PC-9 (cell line): ENCODE measurements at regions of chr4 and their contacts with region 1.

Region 1: DNA sequence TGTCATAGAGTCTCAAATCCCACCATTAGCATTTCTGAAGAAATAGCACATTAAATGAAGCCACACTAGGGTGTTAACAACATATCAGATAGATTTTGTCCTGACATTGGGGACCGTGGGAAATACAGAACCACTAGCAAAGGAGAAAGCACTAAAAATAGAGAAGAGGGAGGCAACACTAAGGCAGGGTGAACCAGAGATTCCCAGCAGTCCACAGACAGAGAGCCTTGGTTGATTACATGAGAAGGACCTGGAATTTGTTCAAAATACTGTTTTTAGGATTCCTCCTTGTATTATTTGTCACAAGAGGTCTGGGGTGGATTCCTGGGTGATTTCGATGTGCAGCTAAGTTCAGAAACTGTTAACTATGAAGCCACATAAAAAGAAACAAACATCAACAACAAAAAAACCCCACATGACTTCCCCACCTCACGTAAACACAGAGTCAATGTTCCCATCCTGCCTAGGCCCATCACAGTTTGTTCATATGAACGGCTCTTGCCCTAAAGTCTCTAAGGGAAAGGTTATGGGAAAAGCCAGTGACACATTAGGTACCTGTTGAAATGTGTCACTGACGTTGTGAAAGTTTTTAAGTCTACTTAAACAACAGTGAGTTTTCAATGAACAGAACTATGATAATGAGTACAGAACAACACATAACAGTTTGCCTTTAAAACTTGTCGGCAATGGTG is 23.6 kb upstream of the GRSF1 start:
- DNase-seq: no peak
- H3K4me3 ChIP-seq: no peak overlapping the region
- H3K27ac ChIP-seq: no peak overlapping the region
- H3K4me1 ChIP-seq: no peaks in the 10 kb centered on the region
- H3K27me3 ChIP-seq: no peaks in the 10 kb centered on the region
- CTCF ChIP-seq: no peak

Region 2: DNA sequence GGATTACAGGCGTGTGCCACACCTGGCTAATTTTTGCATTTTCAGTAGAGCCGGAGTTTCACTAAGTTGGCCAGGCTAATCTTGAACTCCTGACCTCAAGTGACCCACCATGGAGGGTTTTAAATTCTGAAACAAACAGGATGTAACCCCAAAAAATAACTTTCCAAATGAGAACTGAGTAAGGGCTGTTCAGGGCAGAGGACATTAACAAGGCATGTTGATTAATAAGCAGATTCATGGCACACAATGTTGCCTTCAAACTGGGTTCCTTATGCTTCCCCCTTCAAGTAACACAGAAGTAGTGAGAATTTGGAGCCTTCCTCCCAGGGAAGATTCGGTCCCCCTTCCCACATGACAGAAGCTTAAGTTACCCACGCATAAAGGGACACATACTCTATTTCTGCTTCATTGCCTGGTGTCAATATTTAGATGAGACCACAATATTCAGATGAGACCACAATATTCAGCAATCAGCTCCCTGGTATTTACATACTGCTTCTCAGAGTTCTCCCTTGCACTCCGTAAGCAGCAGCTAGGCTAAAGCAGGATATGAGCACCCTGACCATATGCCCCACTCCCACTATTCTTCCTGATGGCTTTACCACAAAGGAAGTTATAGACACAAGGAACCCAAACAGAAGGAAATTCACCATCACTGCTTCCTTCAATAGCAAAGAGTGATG is 44.9 kb before region 1 on chr4:
- CTCF ChIA-PET with region 1: no interaction called
- POLR2A ChIA-PET with region 1: interaction called, 17 read pairs
- intact Hi-C with region 1: no loop called
- DNase-seq: no peak
- H3K4me3 ChIP-seq: no peak overlapping the region
- H3K27ac ChIP-seq: no peak overlapping the region
- H3K4me1 ChIP-seq: no peaks in the 10 kb centered on the region
- H3K27me3 ChIP-seq: no peaks in the 10 kb centered on the region
- CTCF ChIP-seq: no peak

Region 3: GRCh38 chr4:70885174-70885573 is 21.9 kb after region 1 on chr4:
- CTCF ChIA-PET with region 1: no interaction called
- POLR2A ChIA-PET with region 1: no interaction called
- intact Hi-C with region 1: no loop called
- DNase-seq: no peak
- H3K4me3 ChIP-seq: no peak overlapping the region
- H3K27ac ChIP-seq: no peak overlapping the region
- H3K4me1 ChIP-seq: no peaks in the 10 kb centered on the region
- H3K27me3 ChIP-seq: no peaks in the 10 kb centered on the region
- CTCF ChIP-seq: no peak

Region 4: DNA sequence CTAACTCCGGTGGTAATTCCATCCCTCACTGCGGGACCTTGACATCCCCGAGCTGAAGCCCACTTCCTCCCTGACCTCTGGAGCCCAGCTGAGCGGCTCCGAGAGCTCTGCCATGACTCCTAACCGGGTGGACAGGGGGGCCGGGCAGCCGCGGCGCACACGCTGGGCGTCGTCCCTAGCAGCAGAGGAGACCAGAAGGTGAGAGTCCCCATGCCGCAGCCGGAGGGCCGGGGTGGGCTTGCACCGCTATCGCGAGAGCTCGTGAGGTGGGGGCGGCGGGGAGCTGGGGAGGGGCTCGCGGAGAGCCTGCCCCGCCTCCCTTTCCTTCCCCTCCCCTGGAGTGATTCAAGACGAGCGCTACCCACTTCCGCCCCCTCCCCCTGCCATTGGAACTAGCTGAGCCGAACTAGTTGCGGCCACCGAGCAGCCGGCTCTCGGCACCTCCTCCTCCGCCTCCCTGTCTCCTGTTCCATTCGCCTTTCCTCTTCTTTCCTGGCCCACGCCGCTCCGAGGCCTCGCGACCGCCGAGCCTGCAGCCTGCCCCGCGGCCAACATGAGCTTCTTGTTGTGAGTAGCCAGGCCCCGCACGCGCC is 38.8 kb after region 1 on chr4 and contains the start of gene MOB1B:
- CTCF ChIA-PET with region 1: no interaction called
- POLR2A ChIA-PET with region 1: no interaction called
- intact Hi-C with region 1: no loop called
- DNase-seq: peak; percentile 58 to 76
- H3K4me3 ChIP-seq: peak within 1 kb of the TSS; percentile 81
- H3K27ac ChIP-seq: no peak within 1 kb of the TSS
- H3K4me1 ChIP-seq: 0 out of 2 replicates have a peak, but pooled peaks cover 5% of the 10 kb centered on the region
- H3K27me3 ChIP-seq: no peaks in the 10 kb centered on the region
- CTCF ChIP-seq: peak; percentile 40; the same call in 1 of the 2 replicates
- total RNA-seq, gene MOB1B: 14.5 and 14.6 TPM in 2 replicates